ENCODE measurements at regions of chr9 and their contacts with region 1.

Region 1: GRCh38 chr9:121023064-121023463 is 27.0 kb downstream of the C5 start:
- DNase-seq: no peak
- ATAC-seq: 0 out of 3 replicates have a peak, but pooled peaks have one; percentile 32
- H3K4me3 ChIP-seq: no peak overlapping the region
- H3K27ac ChIP-seq: no peak overlapping the region
- H3K4me1 ChIP-seq: no peaks in the 10 kb centered on the region
- H3K27me3 ChIP-seq: no peaks in the 10 kb centered on the region
- CTCF ChIP-seq: peak in 1 of 3 experiments; percentile 13; a peak in 1 of 6 replicates
- EP300 ChIP-seq: no peak
- POLR2A ChIP-seq: no peak
- RAD21 ChIP-seq: no peak

Region 2: GRCh38 chr9:120965344-120966012 is 57.6 kb before region 1 on chr9:
- CTCF ChIA-PET with region 1: no interaction called
- POLR2A ChIA-PET with region 1: no interaction called
- RAD21 ChIA-PET with region 1: no interaction called
- SMC1A ChIA-PET with region 1: no interaction called
- in situ Hi-C with region 1: loop called (anchors 5 kb)
- intact Hi-C with region 1: no loop called
- DNase-seq: no peak
- ATAC-seq: no peak
- H3K4me3 ChIP-seq: no peak overlapping the region
- H3K27ac ChIP-seq: no peak overlapping the region
- H3K4me1 ChIP-seq: no peaks in the 10 kb centered on the region
- H3K27me3 ChIP-seq: no peaks in the 10 kb centered on the region
- CTCF ChIP-seq: no peak
- EP300 ChIP-seq: no peak
- POLR2A ChIP-seq: no peak
- RAD21 ChIP-seq: no peak

Region 3: GRCh38 chr9:121088576-121088975 is 65.5 kb after region 1 on chr9:
- CTCF ChIA-PET with region 1: no interaction called
- POLR2A ChIA-PET with region 1: no interaction called
- RAD21 ChIA-PET with region 1: no interaction called
- SMC1A ChIA-PET with region 1: no interaction called
- in situ Hi-C with region 1: no loop called
- intact Hi-C with region 1: no loop called
- DNase-seq: no peak
- ATAC-seq: peak; percentile 61
- H3K4me3 ChIP-seq: no peak overlapping the region
- H3K27ac ChIP-seq: no peak overlapping the region
- H3K4me1 ChIP-seq: no peaks in the 10 kb centered on the region
- H3K27me3 ChIP-seq: no peaks in the 10 kb centered on the region
- CTCF ChIP-seq: no peak
- EP300 ChIP-seq: no peak
- POLR2A ChIP-seq: no peak
- RAD21 ChIP-seq: no peak

Measured in GM12878 (cell line).